Lower leg skin (tissue), 4 donors: ENCODE measurements at regions of chr1 and their contacts with region 1.

Region 1: DNA sequence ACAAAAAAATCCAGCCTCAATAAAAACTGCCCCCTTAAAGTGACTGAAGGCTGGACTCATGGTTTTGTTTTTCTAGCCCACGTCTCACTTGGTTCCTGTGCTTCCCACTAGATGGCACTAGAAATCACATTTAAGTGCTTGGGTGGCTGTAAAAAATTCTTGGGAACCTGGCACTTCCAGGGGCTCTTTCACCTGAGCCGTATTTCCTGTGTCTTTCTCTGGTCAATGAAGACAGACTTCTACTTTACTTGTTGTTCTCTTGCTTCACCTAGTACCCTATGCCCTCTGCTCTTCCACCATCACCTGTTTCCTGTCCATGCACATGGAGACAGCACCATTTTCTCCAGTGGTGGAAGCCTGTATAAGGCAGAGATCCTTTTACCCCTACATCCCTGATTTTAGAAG is 20.0 kb downstream of the METTL13 start:
- DNase-seq: no peak
- H3K4me3 ChIP-seq: no peak overlapping the region
- CTCF ChIP-seq: no peak
- POLR2A ChIP-seq: no peak

Region 2: DNA sequence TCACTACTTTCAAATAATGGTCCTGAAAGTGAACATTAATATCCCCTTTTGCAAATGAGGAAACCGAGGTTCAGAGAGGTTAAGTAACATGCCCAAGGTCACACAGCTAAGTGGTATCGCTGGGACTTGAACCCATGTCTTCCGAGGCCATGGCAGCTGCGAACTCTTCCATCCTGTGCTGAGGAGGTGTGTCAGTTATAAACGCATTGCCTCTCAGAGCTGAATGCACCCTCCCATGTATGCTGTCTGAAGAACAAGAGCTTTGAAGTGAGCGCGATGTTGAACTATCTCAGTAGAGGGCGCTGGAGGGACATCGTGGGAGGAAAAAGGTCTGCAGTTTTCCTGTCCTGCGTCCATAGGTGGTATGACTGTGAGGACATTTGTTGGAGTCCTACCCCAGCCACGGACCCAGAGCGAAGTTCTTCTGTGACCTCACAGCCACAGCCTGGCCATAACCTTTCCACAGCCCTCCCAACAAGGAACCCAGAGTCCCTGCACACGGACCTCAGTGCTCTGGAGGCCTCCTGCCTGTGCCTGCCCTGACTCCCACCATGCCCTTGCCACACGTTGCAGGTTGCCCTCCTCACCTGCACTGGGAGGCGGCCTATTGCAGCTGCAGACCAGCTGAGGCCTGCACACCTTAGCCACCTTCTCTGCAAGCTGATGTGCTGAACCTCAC is 156.5 kb before region 1 on chr1:
- intact Hi-C with region 1: loop called (anchors 5 kb)
- DNase-seq: peak; percentile 76 to 95
- H3K4me3 ChIP-seq: no peak overlapping the region
- CTCF ChIP-seq: peak in 1 of 3 donors; percentile 25
- POLR2A ChIP-seq: no peak

Region 3: GRCh38 chr1:171984850-171985485 is 183.5 kb after region 1 on chr1:
- intact Hi-C with region 1: loop called (anchors 5 kb)
- DNase-seq: no peak
- H3K4me3 ChIP-seq: no peak overlapping the region
- CTCF ChIP-seq: no peak
- POLR2A ChIP-seq: no peak